Gastrocnemius medialis (tissue), 4 donors: ENCODE measurements at regions of chr1 and their contacts with region 1.

Region 1: DNA sequence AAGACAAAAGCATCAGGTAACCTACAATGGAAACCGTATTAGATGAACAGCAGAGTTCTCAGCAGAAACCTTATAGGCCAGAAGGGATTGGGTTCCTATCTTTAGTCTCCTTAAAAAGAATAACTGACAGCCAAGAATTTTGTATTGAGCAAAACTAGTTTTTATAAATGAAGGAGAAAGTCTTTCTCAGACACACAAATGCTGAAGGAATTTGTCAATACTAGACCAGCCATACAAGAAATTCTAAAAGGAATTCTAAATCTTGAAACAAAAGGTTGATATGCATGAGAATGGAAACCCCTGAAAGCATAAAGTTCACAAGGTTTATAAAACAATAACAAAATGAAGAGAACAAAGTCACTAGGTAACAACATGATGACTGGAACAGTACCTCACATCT is 58.1 kb downstream of the NEK7 start:
- DNase-seq: no peak
- ATAC-seq: no peak
- H3K4me3 ChIP-seq: no peak overlapping the region
- H3K27ac ChIP-seq: no peak overlapping the region
- H3K4me1 ChIP-seq: peaks cover under 1 to 4% of the 10 kb centered on the region in 2 donors
- H3K27me3 ChIP-seq: no peaks in the 10 kb centered on the region
- CTCF ChIP-seq: no peak
- POLR2A ChIP-seq: no peak

Region 2: DNA sequence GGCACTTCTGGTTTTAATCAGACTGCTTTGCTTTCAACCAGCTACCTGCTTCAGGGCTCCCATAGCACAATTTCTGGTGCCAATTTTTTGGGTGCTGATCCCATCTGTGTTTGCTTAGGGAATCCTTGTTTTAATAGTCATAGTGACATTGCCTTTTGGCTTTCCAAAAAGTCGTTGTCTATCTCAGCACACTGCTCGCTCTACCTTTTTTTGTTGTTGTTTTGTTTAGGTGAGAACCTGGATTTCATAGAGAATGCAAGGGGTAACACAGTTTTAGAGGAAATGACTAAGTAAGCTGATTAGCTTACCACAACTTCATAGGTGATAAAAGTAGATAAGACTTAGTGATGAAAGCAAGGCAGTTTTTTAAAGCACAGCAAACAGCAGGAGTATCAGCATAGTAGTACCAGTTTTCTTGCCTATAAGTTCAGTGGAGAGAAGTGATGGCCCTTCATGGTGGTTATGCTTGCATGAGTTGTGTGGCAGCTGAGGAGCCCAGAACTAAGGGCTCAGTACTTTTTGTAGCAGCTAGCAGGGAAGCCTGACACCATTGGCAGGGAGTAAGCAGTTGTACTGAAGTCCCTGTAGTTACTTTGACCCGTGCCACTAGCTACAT is 26.8 kb before region 1 on chr1:
- in situ Hi-C with region 1: no loop called
- intact Hi-C with region 1: loop called (anchors 1 kb)
- DNase-seq: no peak
- ATAC-seq: peak in 1 of 2 donors; percentile 30
- H3K4me3 ChIP-seq: no peak overlapping the region
- H3K27ac ChIP-seq: no peak overlapping the region
- H3K4me1 ChIP-seq: peaks cover 77 to 90% of the 10 kb centered on the region in 2 donors
- H3K27me3 ChIP-seq: no peaks in the 10 kb centered on the region
- CTCF ChIP-seq: no peak
- POLR2A ChIP-seq: no peak